Right ventricle myocardium superior (tissue), 1 donor: ENCODE measurements at regions of chr12 and their contacts with region 1.

Region 1: DNA sequence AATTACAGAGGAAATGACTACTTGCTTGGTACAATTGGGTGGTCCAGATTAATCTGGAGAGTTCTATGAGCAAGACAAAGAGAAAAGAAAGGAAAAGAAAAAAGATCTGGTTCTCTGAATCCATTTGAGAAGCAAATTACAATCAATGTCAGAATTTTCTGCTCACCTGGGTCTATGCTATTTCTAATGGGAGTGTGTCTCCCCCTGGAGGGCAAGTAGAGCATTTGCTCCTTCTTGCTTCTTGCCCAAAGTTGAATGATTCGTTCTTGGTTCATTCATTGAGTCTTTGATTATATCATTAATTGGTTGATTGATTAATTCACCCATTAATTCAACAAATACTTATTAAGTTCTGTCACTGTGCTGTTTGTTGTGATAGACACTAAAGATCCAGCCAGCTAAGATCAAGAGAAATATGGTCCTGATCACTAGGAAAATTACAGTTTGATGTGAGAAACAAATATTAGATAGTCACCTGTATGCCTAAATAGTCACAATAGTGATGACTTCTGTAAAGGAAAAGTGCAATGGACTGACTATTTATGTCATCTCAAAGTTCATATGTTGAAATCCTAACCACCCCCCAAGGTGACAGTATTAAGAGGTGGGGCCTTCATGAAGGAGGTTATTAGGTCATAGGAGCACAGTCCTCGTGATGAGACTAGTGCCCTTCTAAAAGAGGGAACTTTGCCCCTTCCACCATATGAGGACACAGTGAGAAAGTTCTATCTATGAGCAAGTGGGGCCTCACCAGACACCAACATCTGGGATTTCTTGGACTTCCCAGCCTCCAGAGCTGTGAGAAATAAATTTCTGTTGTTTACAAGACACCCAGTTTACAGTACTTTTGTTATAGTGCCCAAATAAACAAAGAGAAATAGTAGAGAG is 8.0 kb upstream of the ASB8 start:
- DNase-seq: no peak
- ATAC-seq: peak; percentile 80

Region 2: GRCh38 chr12:47636908-47637780 is 528.2 kb before region 1 on chr12:
- intact Hi-C with region 1: no loop called
- DNase-seq: peak; percentile 59
- ATAC-seq: no peak

Region 3: DNA sequence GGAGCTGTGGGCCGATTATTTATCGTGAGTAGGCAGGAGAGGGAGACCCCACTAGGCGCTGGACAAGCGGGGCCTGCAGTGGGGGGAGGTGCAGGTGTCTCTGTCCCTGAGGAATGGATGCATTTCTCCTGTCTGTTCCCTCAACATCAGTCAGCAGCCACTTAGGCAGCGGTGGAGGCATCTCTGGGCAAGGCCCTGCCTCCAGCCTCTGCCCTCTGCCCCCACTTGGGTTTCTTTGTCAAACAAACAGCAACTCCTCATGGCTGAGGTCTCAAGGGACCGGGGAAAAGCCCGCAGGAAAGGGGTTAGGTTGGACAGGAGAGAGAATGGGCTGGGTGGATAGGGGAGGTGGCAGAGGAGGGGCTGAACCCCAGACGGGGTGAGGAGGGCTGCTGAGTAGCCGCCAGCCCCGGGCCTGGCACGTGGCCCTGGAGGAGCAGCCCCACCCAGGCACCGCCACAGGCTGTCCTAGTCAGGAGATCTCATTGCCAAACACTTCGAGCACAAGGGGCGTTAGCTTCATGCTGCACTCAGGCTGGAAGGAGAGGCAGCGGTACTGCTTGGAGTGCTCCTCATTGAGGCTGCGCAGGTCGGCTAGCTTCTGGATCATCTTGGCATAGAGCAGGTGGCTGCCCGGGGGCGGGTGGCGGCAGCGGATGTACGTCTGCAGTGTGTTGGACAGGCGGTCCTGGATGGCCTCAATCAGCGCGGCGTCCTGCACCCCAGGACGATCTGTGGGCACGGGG is 320.9 kb before region 1 on chr12:
- intact Hi-C with region 1: no loop called
- DNase-seq: peak; percentile 61
- ATAC-seq: peak; percentile 59

Region 4: DNA sequence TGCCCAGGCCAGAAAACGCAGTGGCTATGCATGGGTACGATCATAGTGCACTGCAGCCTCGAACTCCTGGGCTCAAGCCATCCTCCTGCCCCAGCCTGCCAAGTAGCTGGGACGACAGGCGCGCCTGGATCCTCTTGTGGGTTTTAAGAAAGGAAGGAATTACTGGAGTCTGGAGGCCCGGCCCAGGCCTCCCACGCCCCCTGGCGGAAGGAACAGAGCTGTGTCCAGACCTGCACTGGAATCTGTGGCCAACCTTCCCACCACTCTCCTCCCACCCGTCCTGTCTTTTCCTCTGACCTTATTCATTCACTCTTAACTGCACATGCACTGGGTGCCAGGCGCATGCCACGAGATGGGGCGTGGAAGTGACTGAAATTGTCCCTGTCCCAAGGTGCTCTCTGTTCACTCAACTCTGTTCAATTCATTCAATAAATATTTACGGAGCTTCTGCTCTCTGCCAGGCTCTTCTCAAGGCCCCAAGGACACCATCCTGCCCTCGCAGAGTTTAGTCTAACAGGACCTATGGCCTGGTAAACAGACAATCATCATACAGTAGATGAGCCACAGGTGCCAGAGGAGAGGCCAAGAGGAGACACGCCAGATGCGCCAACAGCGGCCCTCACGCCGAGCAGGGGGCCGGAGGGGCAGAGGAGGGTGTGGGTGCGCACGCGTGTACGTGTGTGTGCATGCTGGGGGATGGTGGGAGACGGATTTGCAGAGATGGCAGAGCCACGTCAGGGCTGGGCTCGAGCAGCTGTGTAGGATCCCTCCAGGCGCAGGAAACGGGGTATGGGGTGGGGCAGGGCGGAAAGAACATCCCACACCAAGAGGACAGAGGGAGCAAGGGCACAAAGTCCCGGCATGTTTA is 215.7 kb before region 1 on chr12:
- intact Hi-C with region 1: loop called (anchors 10 kb)
- DNase-seq: peak; percentile 88
- ATAC-seq: peak; percentile 96

Region 5: GRCh38 chr12:48084066-48084465 is 81.3 kb before region 1 on chr12:
- intact Hi-C with region 1: loop called (anchors 2 kb)
- DNase-seq: no peak
- ATAC-seq: peak; percentile 48

Region 6: DNA sequence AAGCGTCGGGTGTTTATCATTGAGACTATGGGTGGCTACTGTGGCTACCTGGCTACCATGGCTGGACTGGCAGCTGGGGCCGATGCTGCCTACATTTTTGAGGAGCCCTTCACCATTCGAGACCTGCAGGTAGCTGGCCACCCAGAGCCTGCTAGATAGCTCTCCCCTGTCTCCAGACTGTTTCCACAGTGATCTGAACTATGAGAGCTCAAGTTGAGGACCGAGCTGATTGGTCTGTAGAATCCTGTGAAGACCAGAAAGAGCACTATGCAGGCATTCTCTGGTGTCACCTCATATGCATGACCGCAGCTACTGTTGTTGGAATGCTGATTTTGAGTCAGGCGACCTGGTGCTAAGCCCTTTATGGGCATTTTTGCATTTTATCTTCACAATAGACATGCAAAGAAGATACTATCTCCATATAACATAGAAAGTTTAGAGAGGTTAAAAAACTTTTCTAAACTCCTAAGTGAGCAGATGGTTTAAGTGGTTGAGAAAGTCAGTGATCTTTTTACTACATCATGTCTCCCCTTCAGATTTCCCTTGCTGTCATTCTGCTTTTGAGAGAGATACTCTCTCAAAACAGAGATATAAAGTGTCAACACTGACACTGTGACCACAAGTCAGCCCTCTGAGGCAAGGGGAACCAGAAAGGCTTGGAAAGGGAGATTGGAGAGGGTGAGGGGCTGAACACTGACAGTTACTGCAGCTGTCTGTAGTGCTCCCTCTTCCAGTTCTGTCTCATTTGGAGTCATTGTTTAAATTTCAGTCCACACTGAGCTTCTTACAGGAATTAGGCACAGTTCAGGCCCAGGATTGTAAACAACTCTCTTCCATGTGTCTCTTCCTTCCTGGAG is 22.3 kb before region 1 on chr12:
- intact Hi-C with region 1: no loop called
- DNase-seq: no peak
- ATAC-seq: no peak

Region 7: DNA sequence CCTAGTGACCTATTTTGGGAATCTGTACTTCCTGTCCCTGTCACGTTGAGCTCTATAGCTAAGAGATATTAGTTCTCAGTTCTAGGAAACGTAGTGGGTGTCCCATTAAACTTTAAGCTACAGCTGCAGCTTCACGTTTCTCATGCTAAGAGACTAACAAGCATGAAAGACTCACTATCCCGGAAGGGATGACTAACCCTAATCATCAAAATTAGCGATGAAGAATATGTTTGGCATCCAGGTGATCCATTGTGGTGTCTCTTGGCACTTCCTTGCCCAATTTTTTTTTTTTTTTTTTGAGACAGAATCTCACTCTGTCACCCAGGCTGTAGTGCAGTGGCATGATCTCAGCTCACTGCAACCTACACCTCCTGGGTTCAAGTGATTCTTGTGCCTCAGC is 415.5 kb after region 1 on chr12:
- intact Hi-C with region 1: no loop called
- DNase-seq: no peak
- ATAC-seq: no peak